ENCODE measurements at regions of chr1 and their contacts with region 1.

Region 1: GRCh38 chr1:9942939-9943788 is at the starts of genes LZIC and NMNAT1:
- DNase-seq: peak; percentile 50
- ATAC-seq: peak; percentile 100
- H3K4me3 ChIP-seq: peak within 1 kb of the TSS; percentile 92 to 100
- H3K27ac ChIP-seq: peak within 1 kb of the TSS; percentile 99
- H3K4me1 ChIP-seq: no peaks in the 10 kb centered on the region
- H3K27me3 ChIP-seq: no peaks in the 10 kb centered on the region
- CTCF ChIP-seq: no peak
- total RNA-seq, gene LZIC: 37.9 TPM
- total RNA-seq, gene NMNAT1: 7.6 TPM

Region 2: DNA sequence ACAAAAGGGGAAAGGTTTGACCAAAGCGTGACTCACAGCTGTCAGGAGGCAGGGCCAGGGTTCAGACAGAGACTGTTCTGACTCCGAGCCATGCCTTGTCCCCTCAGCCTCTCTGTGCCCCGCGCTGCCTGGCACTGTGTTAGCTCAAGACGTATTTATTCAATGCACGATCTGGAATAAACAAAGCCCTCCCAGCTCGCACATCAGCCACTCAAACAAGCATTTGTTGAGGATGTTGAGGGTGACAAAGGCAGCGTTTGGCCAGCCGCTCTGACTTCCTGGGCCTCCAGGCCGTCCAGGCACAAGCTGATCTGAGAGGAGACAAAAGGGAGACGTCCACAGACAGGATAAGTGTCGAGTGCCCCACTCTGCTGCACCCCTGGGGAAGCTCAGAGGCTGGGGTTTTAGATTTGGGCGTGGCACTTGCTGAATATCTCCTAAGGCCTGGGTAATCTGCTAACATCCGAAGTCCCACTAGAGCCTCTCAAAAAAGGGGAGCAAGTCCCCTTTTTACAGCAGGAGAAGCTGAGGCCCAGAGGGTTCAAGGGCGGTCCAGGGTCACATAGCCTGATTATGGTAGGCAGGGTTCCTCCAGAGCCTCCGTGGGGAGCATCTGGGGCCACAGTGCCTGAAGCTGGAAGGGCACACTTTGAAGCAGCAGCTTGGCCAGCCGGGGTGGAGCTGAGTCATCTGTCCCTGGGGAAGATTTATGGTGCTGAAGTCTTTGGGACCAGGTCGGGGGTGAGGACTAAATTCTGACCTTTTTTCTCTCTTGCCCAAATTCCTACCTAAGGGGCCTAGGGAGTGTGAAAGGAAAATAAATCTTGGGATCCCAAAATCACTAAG is 554.6 kb before region 1 on chr1:
- CTCF ChIA-PET with region 1: no interaction called
- POLR2A ChIA-PET with region 1: no interaction called
- in situ Hi-C with region 1: no loop called
- intact Hi-C with region 1: no loop called
- DNase-seq: no peak
- ATAC-seq: peak; percentile 74
- H3K4me3 ChIP-seq: no peak overlapping the region
- H3K27ac ChIP-seq: peak overlapping the region; percentile 82
- H3K4me1 ChIP-seq: peaks cover 29% of the 10 kb centered on the region
- H3K27me3 ChIP-seq: no peaks in the 10 kb centered on the region
- CTCF ChIP-seq: no peak

Region 3: GRCh38 chr1:9784508-9785133 is 158.5 kb before region 1 on chr1:
- CTCF ChIA-PET with region 1: no interaction called
- POLR2A ChIA-PET with region 1: interaction called, 15 read pairs
- in situ Hi-C with region 1: no loop called
- intact Hi-C with region 1: no loop called
- DNase-seq: peak; percentile 55
- ATAC-seq: peak; percentile 72; the same call in 1 of the 2 replicates
- H3K4me3 ChIP-seq: no peak overlapping the region
- H3K27ac ChIP-seq: no peak overlapping the region
- H3K4me1 ChIP-seq: no peaks in the 10 kb centered on the region
- H3K27me3 ChIP-seq: no peaks in the 10 kb centered on the region
- CTCF ChIP-seq: peak; percentile 87

Region 4: GRCh38 chr1:9874959-9875635 is 68.1 kb before region 1 on chr1:
- CTCF ChIA-PET with region 1: interaction called, 10 read pairs
- POLR2A ChIA-PET with region 1: no interaction called
- in situ Hi-C with region 1: no loop called
- intact Hi-C with region 1: loop called (anchors 1 kb)
- DNase-seq: no peak
- ATAC-seq: peak; percentile 94
- H3K4me3 ChIP-seq: peak overlapping the region; percentile 19 to 50; a peak in 3 of 4 replicates
- H3K27ac ChIP-seq: peak overlapping the region; percentile 57; the same call in 1 of the 2 replicates
- H3K4me1 ChIP-seq: peaks cover 6% of the 10 kb centered on the region; the same call in 1 of the 2 replicates
- H3K27me3 ChIP-seq: no peaks in the 10 kb centered on the region
- CTCF ChIP-seq: peak; percentile 97

Region 5: DNA sequence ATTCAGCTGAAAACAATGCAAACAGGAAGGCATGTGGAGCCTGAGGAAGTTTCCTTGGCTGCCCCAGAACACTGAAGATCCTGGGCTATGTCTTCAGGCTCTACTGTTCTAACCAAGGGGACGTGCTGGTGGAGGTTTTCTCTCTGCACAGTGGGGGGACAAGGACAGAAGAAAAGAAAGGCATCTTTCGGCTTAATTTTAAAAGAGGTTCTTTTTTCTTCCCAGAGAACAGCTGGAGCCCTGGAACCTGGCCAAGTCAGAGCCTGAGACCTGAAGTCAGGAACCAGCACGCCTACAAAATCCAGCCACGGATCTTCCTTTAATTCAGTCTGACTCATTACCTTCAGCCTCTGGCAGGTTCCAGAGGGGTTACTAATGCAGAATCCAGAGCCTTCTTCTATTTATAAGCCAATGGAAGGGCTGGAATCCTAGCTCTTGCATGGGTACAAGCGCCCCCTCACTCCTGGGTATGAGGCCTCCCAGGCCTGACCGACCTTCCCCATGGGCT is 52.9 kb before region 1 on chr1:
- CTCF ChIA-PET with region 1: interaction called, 10 read pairs
- POLR2A ChIA-PET with region 1: no interaction called
- in situ Hi-C with region 1: no loop called
- intact Hi-C with region 1: no loop called
- DNase-seq: no peak
- ATAC-seq: peak; percentile 66
- H3K4me3 ChIP-seq: no peak overlapping the region
- H3K27ac ChIP-seq: peak overlapping the region; percentile 65
- H3K4me1 ChIP-seq: peaks cover 45% of the 10 kb centered on the region
- H3K27me3 ChIP-seq: no peaks in the 10 kb centered on the region
- CTCF ChIP-seq: no peak

Region 6: DNA sequence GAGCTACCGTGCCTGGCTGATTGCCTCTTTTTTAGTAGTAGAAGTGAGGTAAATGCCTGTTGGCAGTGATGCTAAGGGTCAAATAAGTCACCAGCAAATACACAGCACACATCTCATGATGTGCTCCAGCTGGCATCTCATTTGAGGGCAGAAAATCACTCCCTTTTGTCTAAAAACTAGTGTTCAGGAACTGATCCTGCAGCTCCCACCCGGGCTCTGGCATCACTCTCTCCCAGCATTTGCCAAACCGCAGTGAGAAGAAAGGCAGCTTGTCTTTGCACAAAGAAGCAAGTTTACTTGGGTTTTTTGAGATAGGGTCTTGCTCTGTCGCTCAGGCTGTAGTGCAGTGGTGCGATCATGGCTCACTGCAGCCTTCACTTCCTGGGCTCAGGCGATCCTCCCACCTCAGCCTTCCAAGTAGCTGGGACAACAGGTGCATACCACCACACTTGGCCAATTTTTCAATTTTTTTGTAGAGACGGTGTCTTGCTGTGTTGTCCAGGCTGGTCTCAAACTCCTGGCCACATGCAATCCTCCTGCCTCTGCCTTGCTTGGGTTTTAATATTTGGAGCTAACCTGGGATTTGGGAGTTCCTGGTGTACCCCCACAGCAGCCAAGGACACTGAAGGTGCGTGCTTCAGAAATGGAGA is 58.0 kb after region 1 on chr1:
- CTCF ChIA-PET with region 1: no interaction called
- POLR2A ChIA-PET with region 1: interaction called, 11 read pairs
- in situ Hi-C with region 1: no loop called
- intact Hi-C with region 1: no loop called
- DNase-seq: no peak
- ATAC-seq: no peak
- H3K4me3 ChIP-seq: no peak overlapping the region
- H3K27ac ChIP-seq: no peak overlapping the region
- H3K4me1 ChIP-seq: peaks cover 4% of the 10 kb centered on the region
- H3K27me3 ChIP-seq: no peaks in the 10 kb centered on the region
- CTCF ChIP-seq: no peak

Region 7: DNA sequence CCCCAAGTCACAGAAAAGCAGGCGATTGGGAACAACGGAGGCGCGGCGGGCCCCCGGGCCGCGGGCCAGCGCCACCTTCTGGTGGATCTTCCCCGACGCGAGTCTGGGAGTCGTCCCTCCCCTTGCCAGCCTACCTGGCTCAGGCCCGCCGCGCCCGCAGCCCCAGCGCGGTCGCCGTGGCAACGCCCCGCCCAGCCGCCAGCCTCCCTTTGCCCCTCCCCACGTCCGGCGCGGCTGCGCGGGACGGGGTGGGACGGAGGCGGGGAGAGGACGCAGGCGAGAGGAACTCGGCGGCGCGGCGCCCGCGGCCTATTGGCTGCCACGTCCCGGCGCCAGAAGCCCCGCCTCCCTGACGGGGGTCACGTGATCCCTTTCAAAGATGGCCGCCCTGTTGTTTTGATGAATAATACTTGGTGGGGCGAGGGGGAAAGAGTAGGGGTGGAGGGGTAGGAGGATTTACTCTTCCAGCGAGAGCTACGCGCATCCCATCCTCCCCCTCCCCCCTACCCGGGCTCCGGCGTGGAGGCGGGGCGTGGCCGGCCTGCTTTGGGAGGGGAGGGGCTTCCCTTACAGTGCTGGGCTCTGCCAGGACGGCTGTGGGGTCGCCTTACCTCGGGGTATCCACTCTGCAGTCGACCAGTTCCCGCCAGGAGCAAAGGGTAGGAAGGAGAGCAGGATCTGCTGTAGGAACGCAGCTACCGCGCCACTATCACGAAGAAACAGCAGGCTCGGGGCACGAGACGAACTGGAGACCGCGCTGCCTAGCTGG is 89.6 kb after region 1 on chr1 and contains the start of gene UBE4B:
- CTCF ChIA-PET with region 1: no interaction called
- POLR2A ChIA-PET with region 1: no interaction called
- in situ Hi-C with region 1: no loop called
- intact Hi-C with region 1: loop called (anchors 2 kb)
- DNase-seq: peak; percentile 88
- ATAC-seq: peak; percentile 95
- H3K4me3 ChIP-seq: peak within 1 kb of the TSS; percentile 84 to 99
- H3K27ac ChIP-seq: peak within 1 kb of the TSS; percentile 99
- H3K4me1 ChIP-seq: peaks cover 11% of the 10 kb centered on the region; the same call in 1 of the 2 replicates
- H3K27me3 ChIP-seq: no peaks in the 10 kb centered on the region
- CTCF ChIP-seq: peak; percentile 98
- total RNA-seq, gene UBE4B: 54.7 TPM